Posterior cingulate gyrus (tissue), 11 donors: ENCODE measurements at regions of chr2 and their contacts with region 1.

Region 1: DNA sequence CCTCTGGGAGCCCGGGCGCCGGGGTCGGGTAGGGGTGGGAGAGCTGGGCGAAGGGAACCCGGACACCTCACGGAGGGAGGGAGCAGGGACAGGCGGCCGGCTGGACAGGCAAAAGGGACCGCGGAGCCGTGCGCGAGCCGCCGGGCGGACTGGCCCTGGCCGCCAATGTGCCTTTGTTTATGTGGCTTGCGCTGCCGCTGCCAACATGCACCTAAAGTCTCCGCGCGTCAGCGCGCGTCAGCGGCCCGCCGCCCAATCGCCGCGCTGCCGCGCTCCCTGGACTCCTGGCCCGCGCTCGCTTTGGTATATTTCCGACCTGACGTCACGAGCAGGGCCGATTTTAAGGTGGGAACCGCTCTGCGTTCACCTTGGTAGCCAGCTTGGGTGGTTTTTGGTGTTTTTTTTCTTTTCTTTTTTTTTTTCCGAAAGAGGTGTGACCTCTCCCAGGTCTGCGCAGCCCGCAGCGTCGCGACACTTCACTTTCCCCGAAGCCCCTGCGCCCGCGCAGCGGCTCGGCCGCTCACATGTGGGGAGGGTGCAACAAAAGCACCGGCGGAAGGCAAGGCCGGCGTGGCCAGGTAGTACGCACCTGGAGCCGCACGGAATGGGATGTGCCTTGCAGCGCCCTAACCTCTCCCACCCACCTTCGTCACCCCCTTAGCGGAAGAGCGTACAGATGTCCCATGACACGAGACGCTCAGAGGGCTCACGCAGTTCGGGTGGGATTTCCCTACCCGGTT is at the start of gene NR4A2:
- DNase-seq: peak; percentile 74 to 97 (median 84)

Region 2: DNA sequence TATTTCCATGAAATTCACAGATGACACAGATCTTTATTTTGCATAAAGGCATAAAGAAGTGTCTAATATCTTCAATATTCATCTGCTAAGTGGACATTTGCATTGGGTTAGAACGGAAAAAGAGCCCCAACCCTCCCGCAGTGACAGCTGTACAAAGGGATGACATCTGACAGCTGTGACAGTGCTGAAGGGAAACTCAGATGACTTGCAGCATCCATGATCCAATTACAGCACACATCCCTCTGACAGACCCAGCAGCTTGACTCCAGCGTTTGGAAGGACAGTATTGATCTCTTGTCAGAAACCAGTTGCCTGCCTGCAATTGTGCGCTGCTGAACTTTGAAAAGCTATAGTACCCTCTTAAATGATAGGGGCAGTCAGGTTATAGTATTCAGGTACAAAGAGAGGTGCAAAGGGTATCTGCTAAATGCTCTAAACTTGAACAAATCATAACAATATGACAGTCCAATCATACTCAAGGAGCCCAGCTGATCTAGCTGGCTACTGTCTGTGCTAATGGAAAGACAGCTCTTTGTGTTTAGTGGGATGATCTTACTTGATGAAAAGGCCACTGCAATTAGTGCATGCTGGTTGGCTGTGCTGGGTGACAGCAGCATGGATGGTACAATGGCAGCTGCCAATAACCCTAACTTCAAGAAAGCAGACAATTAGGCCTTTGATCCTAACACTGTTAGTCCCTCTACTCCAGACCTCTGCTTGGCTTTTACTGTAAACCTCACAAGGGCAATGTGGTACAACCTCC is 599.4 kb before region 1 on chr2:
- intact Hi-C with region 1: loop called (anchors 10 kb)
- DNase-seq: peak in 8 of 10 donors; percentile 14 to 90 (median 44)

Region 3: GRCh38 chr2:156589381-156590079 is 256.8 kb after region 1 on chr2:
- intact Hi-C with region 1: loop called (anchors 2 kb)
- DNase-seq: peak in 1 of 10 donors; percentile 28